ENCODE measurements at regions of chr16 and their contacts with region 1.

Region 1: DNA sequence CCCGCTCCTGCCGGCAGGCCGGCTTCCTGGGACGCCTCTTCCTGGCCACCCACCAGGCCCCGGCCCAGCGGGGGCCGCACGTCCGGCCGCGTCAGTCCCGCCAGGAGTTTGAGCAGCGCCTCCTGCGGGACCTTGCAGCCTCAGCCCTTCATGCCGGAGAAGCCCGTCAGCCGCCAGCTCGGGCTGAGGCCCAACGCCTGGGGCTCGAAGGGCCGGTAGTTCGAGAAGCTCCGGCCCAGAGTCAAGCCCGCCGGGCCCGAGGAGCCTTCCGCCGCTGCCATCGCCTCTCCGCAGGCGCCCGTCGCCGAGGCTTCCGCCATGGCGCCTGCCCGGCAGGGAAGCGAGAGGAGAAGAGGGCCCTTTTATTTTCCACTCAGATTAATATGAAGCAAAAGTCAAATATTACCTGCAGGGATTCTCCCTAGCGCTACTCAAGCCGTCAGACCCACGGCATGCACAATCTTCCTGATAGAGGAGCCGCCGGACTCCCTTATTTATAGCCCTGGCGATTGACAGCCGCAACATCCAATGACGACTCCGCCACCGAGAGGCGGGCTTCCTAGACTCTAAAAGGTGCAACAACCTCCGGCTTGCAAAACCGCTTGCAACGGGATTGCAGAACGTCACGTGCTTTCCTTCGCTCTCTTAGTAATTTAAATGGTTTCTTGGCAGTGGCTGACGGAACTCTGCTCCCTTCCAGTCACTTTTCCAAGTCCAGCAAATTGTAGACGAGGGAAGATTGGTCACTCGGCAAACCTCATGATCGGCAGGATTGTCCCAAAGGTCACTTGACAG is at the start of gene SEPHS2:
- DNase-seq: peak; percentile 99
- total RNA-seq, gene SEPHS2: 116 and 127 TPM in 2 replicates

Region 2: GRCh38 chr16:30519120-30520049 is 73.8 kb after region 1 on chr16:
- in situ Hi-C with region 1: loop called (anchors 10 kb)
- DNase-seq: no peak

Measured in Caki2 (cell line).